ENCODE measurements at regions of chr11 and their contacts with region 1.

Region 1: DNA sequence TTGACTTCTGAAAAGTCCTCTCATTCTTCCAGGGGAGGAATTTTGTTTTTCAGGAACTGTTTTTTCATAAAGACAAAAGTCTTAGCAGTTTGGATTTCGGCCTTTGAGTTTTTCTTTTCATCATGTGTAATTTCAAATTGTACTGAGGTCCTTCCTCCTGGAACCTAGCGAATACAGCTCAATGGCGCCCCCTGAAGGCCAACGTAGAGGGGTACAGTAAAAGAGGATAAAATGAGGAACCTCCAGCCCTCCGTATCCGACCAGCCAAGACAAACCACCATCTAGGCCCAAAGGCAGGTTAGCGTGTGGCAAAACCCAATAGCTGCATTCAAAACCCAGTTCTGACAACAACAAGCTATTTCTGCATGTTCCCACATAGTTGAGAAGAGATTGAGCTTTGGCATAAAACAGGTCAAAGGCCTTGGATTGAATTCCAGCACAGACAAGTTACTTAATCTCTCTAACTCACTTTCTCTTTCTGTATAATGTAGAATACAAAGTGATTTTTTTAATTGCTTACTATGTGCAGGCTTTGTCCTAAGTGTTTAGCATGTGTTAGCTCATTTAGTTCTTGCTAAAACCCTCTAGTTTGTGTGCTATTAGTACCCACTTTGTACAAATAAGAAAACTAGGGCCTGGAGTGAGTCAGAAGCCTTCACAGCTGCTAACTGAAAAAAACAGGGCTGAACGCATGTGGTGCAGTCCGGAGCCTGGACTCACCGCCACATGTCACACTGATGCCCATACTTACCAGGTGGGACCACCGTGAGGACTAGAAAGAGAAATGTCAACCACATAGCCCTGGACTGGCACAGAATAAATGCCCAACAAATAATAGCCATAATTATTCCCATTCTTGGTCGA is 43.2 kb upstream of the ETS1 start:
- DNase-seq: peak; percentile 89
- ATAC-seq: peak; percentile 87
- H3K4me3 ChIP-seq: peak overlapping the region; percentile 15; the same call in 1 of the 2 replicates
- H3K27ac ChIP-seq: peak overlapping the region; percentile 64
- H3K4me1 ChIP-seq: peaks cover 51% of the 10 kb centered on the region
- H3K27me3 ChIP-seq: no peaks in the 10 kb centered on the region
- CTCF ChIP-seq: peak; percentile 80 to 97 (median 82)
- EP300 ChIP-seq: no peak
- POLR2A ChIP-seq: no peak
- RAD21 ChIP-seq: peak; percentile 98

Region 2: GRCh38 chr11:128172046-128172878 is 458.3 kb before region 1 on chr11:
- CTCF ChIA-PET with region 1: interaction called, 129 read pairs
- POLR2A ChIA-PET with region 1: interaction called, 3 read pairs
- RAD21 ChIA-PET with region 1: interaction called, 97 read pairs
- SMC1A ChIA-PET with region 1: interaction called, 119 read pairs
- in situ Hi-C with region 1: loop called (anchors 5 kb)
- intact Hi-C with region 1: loop called (anchors 1 kb)
- DNase-seq: peak; percentile 38
- ATAC-seq: peak; percentile 93
- H3K4me3 ChIP-seq: no peak overlapping the region
- H3K27ac ChIP-seq: no peak overlapping the region
- H3K4me1 ChIP-seq: no peaks in the 10 kb centered on the region
- H3K27me3 ChIP-seq: no peaks in the 10 kb centered on the region; a peak in 2 of 4 replicates
- CTCF ChIP-seq: peak; percentile 68 to 91 (median 72)
- EP300 ChIP-seq: no peak
- POLR2A ChIP-seq: no peak
- RAD21 ChIP-seq: peak; percentile 97

Region 3: GRCh38 chr11:128323381-128323780 is 307.2 kb before region 1 on chr11:
- CTCF ChIA-PET with region 1: interaction called, 47 read pairs
- POLR2A ChIA-PET with region 1: interaction called, 3 read pairs
- RAD21 ChIA-PET with region 1: interaction called, 29 read pairs
- SMC1A ChIA-PET with region 1: interaction called, 16 read pairs
- in situ Hi-C with region 1: no loop called
- intact Hi-C with region 1: no loop called
- DNase-seq: no peak
- ATAC-seq: peak; percentile 43
- H3K4me3 ChIP-seq: no peak overlapping the region
- H3K27ac ChIP-seq: no peak overlapping the region
- H3K4me1 ChIP-seq: peaks cover 11% of the 10 kb centered on the region
- H3K27me3 ChIP-seq: no peaks in the 10 kb centered on the region
- CTCF ChIP-seq: peak; percentile 41 to 46 (median 45); a peak in 5 of 6 replicates
- EP300 ChIP-seq: no peak
- POLR2A ChIP-seq: no peak
- RAD21 ChIP-seq: peak; percentile 74

Region 4: GRCh38 chr11:128522055-128522942 is 108.3 kb before region 1 on chr11:
- CTCF ChIA-PET with region 1: interaction called, 43 read pairs
- POLR2A ChIA-PET with region 1: interaction called, 14 read pairs
- RAD21 ChIA-PET with region 1: interaction called, 96 read pairs
- SMC1A ChIA-PET with region 1: interaction called, 71 read pairs
- in situ Hi-C with region 1: no loop called
- intact Hi-C with region 1: loop called (anchors 2 kb)
- DNase-seq: peak; percentile 59
- ATAC-seq: peak; percentile 85
- H3K4me3 ChIP-seq: peak overlapping the region; percentile 96
- H3K27ac ChIP-seq: peak overlapping the region; percentile 96
- H3K4me1 ChIP-seq: peaks cover 17% of the 10 kb centered on the region
- H3K27me3 ChIP-seq: no peaks in the 10 kb centered on the region
- CTCF ChIP-seq: no peak
- EP300 ChIP-seq: no peak
- POLR2A ChIP-seq: peak; percentile 97
- RAD21 ChIP-seq: 0 out of 2 replicates have a peak, but pooled peaks have one; percentile 9

Region 5: GRCh38 chr11:128704517-128704916 is 73.9 kb after region 1 on chr11:
- CTCF ChIA-PET with region 1: no interaction called
- POLR2A ChIA-PET with region 1: no interaction called
- RAD21 ChIA-PET with region 1: no interaction called
- SMC1A ChIA-PET with region 1: no interaction called
- in situ Hi-C with region 1: no loop called
- intact Hi-C with region 1: no loop called
- DNase-seq: no peak
- ATAC-seq: peak; percentile 58
- H3K4me3 ChIP-seq: no peak overlapping the region
- H3K27ac ChIP-seq: no peak overlapping the region
- H3K4me1 ChIP-seq: peaks cover 25% of the 10 kb centered on the region
- H3K27me3 ChIP-seq: no peaks in the 10 kb centered on the region
- CTCF ChIP-seq: no peak
- EP300 ChIP-seq: no peak
- POLR2A ChIP-seq: no peak
- RAD21 ChIP-seq: no peak

Region 6: GRCh38 chr11:128720522-128720985 is 90.0 kb after region 1 on chr11:
- CTCF ChIA-PET with region 1: interaction called, 15 read pairs
- POLR2A ChIA-PET with region 1: no interaction called
- RAD21 ChIA-PET with region 1: interaction called, 15 read pairs
- SMC1A ChIA-PET with region 1: interaction called, 11 read pairs
- in situ Hi-C with region 1: no loop called
- intact Hi-C with region 1: no loop called
- DNase-seq: no peak
- ATAC-seq: peak; percentile 59
- H3K4me3 ChIP-seq: peak overlapping the region; percentile 78
- H3K27ac ChIP-seq: peak overlapping the region; percentile 94
- H3K4me1 ChIP-seq: peaks cover 85% of the 10 kb centered on the region
- H3K27me3 ChIP-seq: no peaks in the 10 kb centered on the region
- CTCF ChIP-seq: no peak
- EP300 ChIP-seq: no peak
- POLR2A ChIP-seq: peak; percentile 84
- RAD21 ChIP-seq: 0 out of 2 replicates have a peak, but pooled peaks have one; percentile 1

Region 7: DNA sequence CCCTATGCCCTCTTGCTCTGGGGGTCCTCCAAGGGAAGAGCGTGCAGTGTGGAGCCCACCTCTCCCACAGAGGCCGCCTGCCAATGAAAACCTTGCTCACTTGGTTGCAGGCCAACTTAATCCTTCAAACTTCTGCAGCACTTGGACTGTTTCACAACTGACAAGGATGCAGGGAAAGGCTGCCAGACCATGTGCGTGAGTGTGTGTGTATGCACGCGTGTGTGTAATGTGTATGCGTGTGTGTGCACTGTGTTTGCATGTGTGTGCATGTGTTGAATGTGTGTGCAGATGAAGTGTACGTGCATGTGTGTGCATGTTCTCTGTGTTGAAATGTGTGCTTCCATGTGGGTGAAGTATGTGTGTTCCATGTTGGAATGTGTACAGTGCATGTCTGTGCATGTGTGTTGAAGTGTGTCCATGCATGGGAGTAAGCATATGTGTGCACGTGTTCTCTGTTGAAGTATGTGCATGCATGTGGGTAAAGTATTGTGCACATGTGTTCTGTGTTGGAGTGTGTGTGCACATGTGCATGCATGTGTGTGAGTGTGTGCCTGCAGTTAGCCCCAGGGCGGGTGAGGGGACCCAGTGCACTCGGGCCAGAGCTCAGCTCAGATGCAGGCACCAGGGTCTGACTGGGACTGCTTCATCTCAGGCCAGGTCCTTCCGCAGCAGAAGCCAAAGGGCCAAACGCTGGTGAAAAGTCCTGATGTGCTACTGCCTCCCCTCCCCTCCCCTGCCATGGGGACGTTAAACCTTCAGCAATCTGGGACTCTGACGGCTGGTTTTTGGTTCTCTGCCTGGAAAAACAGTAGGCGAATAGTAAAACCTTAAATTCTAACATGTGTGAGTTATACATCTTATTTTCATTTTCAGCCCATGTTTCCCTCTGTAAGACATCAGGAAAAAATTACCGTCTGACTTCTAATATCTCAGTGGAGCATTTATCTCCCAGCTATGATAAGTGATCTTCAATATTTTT is 135.3 kb after region 1 on chr11:
- CTCF ChIA-PET with region 1: interaction called, 187 read pairs
- POLR2A ChIA-PET with region 1: no interaction called
- RAD21 ChIA-PET with region 1: interaction called, 103 read pairs
- SMC1A ChIA-PET with region 1: interaction called, 3 read pairs
- in situ Hi-C with region 1: loop called (anchors 5 kb)
- intact Hi-C with region 1: no loop called
- DNase-seq: no peak
- ATAC-seq: no peak
- H3K4me3 ChIP-seq: no peak overlapping the region
- H3K27ac ChIP-seq: no peak overlapping the region
- H3K4me1 ChIP-seq: no peaks in the 10 kb centered on the region
- H3K27me3 ChIP-seq: no peaks in the 10 kb centered on the region
- CTCF ChIP-seq: no peak
- EP300 ChIP-seq: no peak
- POLR2A ChIP-seq: no peak
- RAD21 ChIP-seq: no peak

Region 8: GRCh38 chr11:129013737-129014475 is 383.3 kb after region 1 on chr11:
- CTCF ChIA-PET with region 1: no interaction called
- POLR2A ChIA-PET with region 1: no interaction called
- RAD21 ChIA-PET with region 1: no interaction called
- SMC1A ChIA-PET with region 1: no interaction called
- in situ Hi-C with region 1: no loop called
- intact Hi-C with region 1: no loop called
- DNase-seq: no peak
- ATAC-seq: no peak
- H3K4me3 ChIP-seq: no peak overlapping the region
- H3K27ac ChIP-seq: no peak overlapping the region
- H3K4me1 ChIP-seq: no peaks in the 10 kb centered on the region
- H3K27me3 ChIP-seq: no peaks in the 10 kb centered on the region
- CTCF ChIP-seq: no peak
- EP300 ChIP-seq: no peak
- POLR2A ChIP-seq: no peak
- RAD21 ChIP-seq: no peak